Naive thymus-derived CD4-positive, alpha-beta T cell (primary cell): ENCODE measurements at regions of chr14 and their contacts with region 1.

Region 1: DNA sequence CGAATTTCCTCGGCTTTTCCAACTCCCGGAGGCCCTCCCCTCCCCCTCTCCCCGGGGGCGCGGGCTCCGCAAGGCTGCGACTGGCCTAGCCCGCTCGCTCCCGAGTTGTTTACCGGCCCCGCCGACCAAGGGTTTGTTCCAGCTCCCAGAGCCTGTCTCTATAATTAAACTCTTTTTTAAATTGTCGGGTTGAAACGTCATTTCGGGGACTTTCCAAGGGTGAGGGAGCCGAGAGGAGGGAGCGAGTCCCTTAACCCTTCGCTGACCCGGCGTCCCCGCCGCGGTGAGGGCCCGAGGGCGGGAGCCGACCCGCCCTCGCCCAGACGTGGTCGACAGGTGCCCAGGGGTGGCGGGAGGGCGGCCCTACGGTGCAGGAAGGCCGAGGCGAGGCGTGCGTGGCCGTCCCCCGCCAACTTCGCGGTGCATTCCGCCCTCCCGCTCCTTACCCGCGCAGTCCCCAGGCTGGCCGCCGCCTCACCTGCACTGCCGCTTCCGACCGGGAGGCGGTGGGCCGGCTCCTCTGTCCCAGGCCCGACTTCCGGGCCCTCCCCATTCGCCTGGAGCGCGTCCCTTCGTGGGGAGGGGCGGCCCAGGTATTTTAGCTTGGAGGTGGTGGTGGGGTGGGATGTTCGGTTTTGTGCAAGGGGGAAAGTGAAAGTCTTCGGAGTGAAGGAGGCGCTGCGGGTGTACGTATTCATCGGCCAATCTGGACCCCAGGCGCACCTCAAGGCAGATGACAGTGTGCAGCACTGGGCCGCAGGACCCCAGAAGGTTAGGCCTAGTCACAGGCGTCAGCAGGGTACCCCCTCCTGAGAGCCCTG is 2.9 kb upstream of the ZFP36L1 start:
- DNase-seq: peak; percentile 77 to 92 (median 86)
- ATAC-seq: peak; percentile 56
- H3K4me3 ChIP-seq: peak overlapping the region; percentile 91
- H3K4me3 Mint-ChIP-seq: peak overlapping the region; percentile 92 to 99 (median 95)
- H3K27ac ChIP-seq: peak overlapping the region; percentile 100
- H3K27ac Mint-ChIP-seq: peak overlapping the region; percentile 91 to 100 (median 98)
- H3K4me1 ChIP-seq: peaks cover 11 to 18% of the 10 kb centered on the region in 2 donors
- H3K4me1 Mint-ChIP-seq: peaks cover 9 to 37% (median 31%) of the 10 kb centered on the region in 7 donors
- H3K27me3 ChIP-seq: no peaks in the 10 kb centered on the region
- H3K27me3 Mint-ChIP-seq: peaks cover 0 to 4% (median 0%) of the 10 kb centered on the region in 5 donors

Region 2: GRCh38 chr14:67359775-67360648 is 1435.8 kb before region 1 on chr14 and contains the starts of genes ATP6V1D and EIF2S1:
- CTCF ChIA-PET with region 1: no interaction called
- POLR2A ChIA-PET with region 1: no interaction called
- intact Hi-C with region 1: loop called in 1 of 2 experiments (anchors 5 kb)
- DNase-seq: peak; percentile 97 to 100 (median 100)
- ATAC-seq: peak; percentile 94
- H3K4me3 ChIP-seq: peak within 1 kb of the TSS; percentile 87
- H3K4me3 Mint-ChIP-seq: peak within 1 kb of the TSS; percentile 93 to 99 (median 98)
- H3K27ac ChIP-seq: peak within 1 kb of the TSS; percentile 82
- H3K27ac Mint-ChIP-seq: peak within 1 kb of the TSS; percentile 94 to 99 (median 96)
- H3K4me1 ChIP-seq: peaks cover 24 to 38% of the 10 kb centered on the region in 2 donors
- H3K4me1 Mint-ChIP-seq: peaks cover 43 to 94% (median 85%) of the 10 kb centered on the region in 7 donors
- H3K27me3 ChIP-seq: no peaks in the 10 kb centered on the region
- H3K27me3 Mint-ChIP-seq: peaks cover 0 to 5% (median 0%) of the 10 kb centered on the region in 5 donors
- total RNA-seq, gene ATP6V1D: 28.5 to 41.5 (median 33.4) TPM
- total RNA-seq, gene EIF2S1: 41.4 to 115 (median 49.4) TPM

Region 3: GRCh38 chr14:68377459-68377858 is 418.3 kb before region 1 on chr14:
- CTCF ChIA-PET with region 1: no interaction called
- POLR2A ChIA-PET with region 1: interaction called, 13 read pairs
- intact Hi-C with region 1: loop called in 1 of 2 experiments (anchors 2 kb)
- DNase-seq: no peak
- ATAC-seq: peak; percentile 62
- H3K4me3 ChIP-seq: no peak overlapping the region
- H3K4me3 Mint-ChIP-seq: peak overlapping the region in 7 of 10 donors; percentile 29 to 72 (median 59)
- H3K27ac ChIP-seq: peak overlapping the region; percentile 37
- H3K27ac Mint-ChIP-seq: peak overlapping the region in 7 of 9 donors; percentile 69 to 89 (median 81)
- H3K4me1 ChIP-seq: peaks cover 0 to 38% of the 10 kb centered on the region in 2 donors
- H3K4me1 Mint-ChIP-seq: peaks cover 30 to 84% (median 72%) of the 10 kb centered on the region in 7 donors
- H3K27me3 ChIP-seq: no peaks in the 10 kb centered on the region
- H3K27me3 Mint-ChIP-seq: no peaks in the 10 kb centered on the region

Region 4: DNA sequence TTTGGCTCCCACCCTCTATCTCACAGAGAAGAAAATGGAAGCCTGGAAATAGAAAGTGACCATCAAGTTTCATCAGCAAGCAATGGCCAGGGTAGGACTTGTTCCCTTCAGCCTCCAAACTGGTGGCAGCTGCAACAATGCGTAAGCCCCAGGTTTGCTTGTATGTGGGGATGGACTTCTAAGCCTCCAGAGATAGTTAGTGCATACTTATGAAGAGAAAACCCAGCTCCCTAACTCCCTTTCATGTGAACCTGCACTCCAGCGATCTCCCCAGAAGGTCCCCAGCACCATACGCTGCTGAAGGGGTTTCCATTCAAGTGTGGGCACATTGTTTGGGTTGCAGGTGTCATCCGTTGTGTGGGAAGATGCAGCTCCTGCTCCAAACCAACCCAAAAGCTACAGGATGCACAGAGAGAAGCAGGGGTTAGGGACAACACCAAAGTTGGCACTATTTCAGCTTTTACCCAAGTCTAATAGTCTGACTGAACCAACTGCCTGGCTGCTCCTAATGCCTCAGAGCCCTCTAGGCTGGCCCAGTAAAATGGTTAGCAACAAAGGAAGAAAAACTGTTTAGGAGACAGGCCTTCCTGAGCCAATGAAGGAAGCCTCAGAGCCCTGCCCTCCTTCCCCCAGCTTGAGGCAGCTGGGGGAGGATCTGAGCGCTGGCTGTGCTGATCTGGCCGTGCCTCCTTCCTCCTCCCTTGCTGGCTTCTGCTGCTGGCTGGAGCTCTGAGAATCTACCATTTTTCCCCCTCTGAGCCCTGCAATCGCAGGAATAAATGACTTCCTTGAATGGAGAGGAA is 15.2 kb before region 1 on chr14:
- CTCF ChIA-PET with region 1: interaction called, 33 read pairs
- POLR2A ChIA-PET with region 1: interaction called, 1,273 read pairs
- intact Hi-C with region 1: loop called in 1 of 2 experiments (anchors 1 kb)
- DNase-seq: peak in 5 of 9 donors; percentile 26 to 39 (median 33)
- ATAC-seq: peak; percentile 31
- H3K4me3 ChIP-seq: peak overlapping the region; percentile 57
- H3K4me3 Mint-ChIP-seq: peak overlapping the region; percentile 74 to 87 (median 84)
- H3K27ac ChIP-seq: peak overlapping the region; percentile 65
- H3K27ac Mint-ChIP-seq: peak overlapping the region; percentile 82 to 94 (median 92)
- H3K4me1 ChIP-seq: peaks cover 62 to 68% of the 10 kb centered on the region in 2 donors
- H3K4me1 Mint-ChIP-seq: peaks cover 39 to 90% (median 82%) of the 10 kb centered on the region in 7 donors
- H3K27me3 ChIP-seq: no peaks in the 10 kb centered on the region
- H3K27me3 Mint-ChIP-seq: no peaks in the 10 kb centered on the region

Region 5: GRCh38 chr14:68970038-68970612 is 174.3 kb after region 1 on chr14:
- CTCF ChIA-PET with region 1: no interaction called
- POLR2A ChIA-PET with region 1: interaction called, 3 read pairs
- intact Hi-C with region 1: loop called in 1 of 2 experiments (anchors 2 kb)
- DNase-seq: peak in 7 of 9 donors; percentile 81 to 94 (median 91)
- ATAC-seq: peak; percentile 77
- H3K4me3 ChIP-seq: peak overlapping the region; percentile 46
- H3K4me3 Mint-ChIP-seq: peak overlapping the region; percentile 43 to 96 (median 90)
- H3K27ac ChIP-seq: peak overlapping the region; percentile 89
- H3K27ac Mint-ChIP-seq: peak overlapping the region; percentile 85 to 100 (median 99)
- H3K4me1 ChIP-seq: peaks cover 27 to 79% of the 10 kb centered on the region in 2 donors
- H3K4me1 Mint-ChIP-seq: peaks cover 57 to 100% (median 90%) of the 10 kb centered on the region in 7 donors
- H3K27me3 ChIP-seq: no peaks in the 10 kb centered on the region
- H3K27me3 Mint-ChIP-seq: no peaks in the 10 kb centered on the region

Region 6: GRCh38 chr14:69129264-69129880 is 333.6 kb after region 1 on chr14:
- CTCF ChIA-PET with region 1: no interaction called
- POLR2A ChIA-PET with region 1: no interaction called
- intact Hi-C with region 1: no loop called
- DNase-seq: peak; percentile 28 to 82 (median 72)
- ATAC-seq: peak; percentile 95
- H3K4me3 ChIP-seq: no peak overlapping the region
- H3K4me3 Mint-ChIP-seq: peak overlapping the region in 8 of 10 donors; percentile 2 to 37 (median 23)
- H3K27ac ChIP-seq: peak overlapping the region; percentile 27
- H3K27ac Mint-ChIP-seq: peak overlapping the region in 8 of 9 donors; percentile 44 to 91 (median 82)
- H3K4me1 ChIP-seq: peaks cover 16 to 33% of the 10 kb centered on the region in 2 donors
- H3K4me1 Mint-ChIP-seq: peaks cover 36 to 94% (median 90%) of the 10 kb centered on the region in 7 donors
- H3K27me3 ChIP-seq: no peaks in the 10 kb centered on the region
- H3K27me3 Mint-ChIP-seq: no peaks in the 10 kb centered on the region

Region 7: DNA sequence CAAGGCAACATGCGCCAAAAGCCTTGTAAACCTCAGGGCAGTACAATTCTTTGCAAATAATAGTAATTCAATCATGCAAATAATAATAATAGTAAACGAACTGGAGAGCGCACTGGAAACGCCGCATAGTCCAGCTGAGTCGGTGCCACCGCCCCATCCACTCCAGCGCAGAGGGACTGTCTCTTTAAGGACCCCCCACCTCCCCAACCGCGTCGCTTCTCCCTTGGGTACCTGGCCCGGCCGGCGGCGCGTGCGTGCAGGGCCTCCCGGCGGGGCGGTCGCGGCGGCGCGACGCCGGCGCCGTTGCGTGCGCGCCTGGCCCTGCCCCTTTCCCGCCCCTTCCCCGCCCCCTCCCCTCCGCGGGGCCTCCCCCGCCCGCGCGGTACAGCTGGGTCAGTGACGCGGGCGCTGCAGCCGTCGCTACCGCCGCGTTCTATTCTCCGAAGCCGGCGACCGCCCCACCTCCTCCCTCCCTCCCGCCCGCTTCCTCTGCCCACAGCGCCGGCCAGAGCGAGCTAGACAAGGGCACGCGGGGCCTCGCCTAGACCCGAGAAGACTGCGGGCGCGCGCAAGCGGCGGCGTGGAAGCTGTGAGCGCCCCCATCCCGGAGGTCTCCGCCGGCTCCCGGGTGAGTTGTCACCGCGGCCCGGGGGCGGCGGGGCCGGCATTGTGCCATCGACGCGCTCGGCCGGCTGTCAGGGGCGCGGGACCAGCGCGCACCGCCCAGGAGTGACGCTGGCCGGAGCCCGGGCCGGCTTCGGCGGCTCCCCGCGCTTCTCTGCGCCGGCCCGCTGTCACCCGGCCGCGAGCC is 815.6 kb after region 1 on chr14 and contains the start of gene SUSD6:
- CTCF ChIA-PET with region 1: no interaction called
- POLR2A ChIA-PET with region 1: interaction called, 3 read pairs
- intact Hi-C with region 1: loop called in 1 of 2 experiments (anchors 5 kb)
- DNase-seq: peak; percentile 79 to 87 (median 85)
- ATAC-seq: peak; percentile 88
- H3K4me3 ChIP-seq: peak within 1 kb of the TSS; percentile 91
- H3K4me3 Mint-ChIP-seq: peak within 1 kb of the TSS; percentile 91 to 98 (median 94)
- H3K27ac ChIP-seq: peak within 1 kb of the TSS; percentile 85
- H3K27ac Mint-ChIP-seq: peak within 1 kb of the TSS; percentile 95 to 99 (median 98)
- H3K4me1 ChIP-seq: peaks cover 38 to 54% of the 10 kb centered on the region in 2 donors
- H3K4me1 Mint-ChIP-seq: peaks cover 44 to 69% (median 63%) of the 10 kb centered on the region in 7 donors
- H3K27me3 ChIP-seq: no peaks in the 10 kb centered on the region
- H3K27me3 Mint-ChIP-seq: no peaks in the 10 kb centered on the region
- total RNA-seq, gene SUSD6: 42.9 to 90.8 (median 65.0) TPM